ENCODE measurements at regions of chr11 and their contacts with region 1.

Region 1: GRCh38 chr11:119323538-119324033 is 6.7 kb upstream of the MCAM start:
- DNase-seq: no peak

Region 2: DNA sequence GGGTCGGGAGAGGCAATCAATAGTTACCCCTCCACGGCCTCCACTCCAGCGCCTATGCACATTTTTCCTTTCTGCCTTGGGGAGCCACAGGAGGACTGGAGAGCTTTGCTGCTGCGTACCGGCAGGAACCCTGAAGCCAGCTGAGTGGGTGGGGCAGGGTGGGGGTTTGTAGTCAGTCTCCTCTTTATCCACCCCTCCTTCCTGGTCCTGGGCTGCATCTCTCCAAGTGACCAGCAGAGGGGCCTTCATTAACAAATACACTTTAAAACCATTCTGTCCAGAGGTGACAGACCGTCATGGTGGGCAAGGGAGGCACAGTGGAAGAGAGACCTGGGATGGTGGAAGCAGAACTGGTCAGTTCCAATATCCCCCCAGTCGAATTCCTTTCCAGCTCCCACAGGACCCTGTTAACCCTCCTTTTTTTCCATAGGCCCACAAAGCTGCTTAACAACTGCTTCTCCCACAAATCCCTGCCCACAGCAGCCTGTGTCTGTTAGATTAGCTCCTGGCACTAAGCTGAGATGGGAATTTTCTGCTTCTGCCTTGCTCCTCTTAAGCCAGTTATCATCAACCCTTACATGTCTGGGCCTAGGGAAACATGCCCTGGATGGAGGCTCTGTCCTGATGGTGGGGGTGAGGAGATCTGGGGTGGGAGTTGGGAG is 178.6 kb before region 1 on chr11:
- intact Hi-C with region 1: loop called (anchors 5 kb)
- DNase-seq: no peak

Region 3: DNA sequence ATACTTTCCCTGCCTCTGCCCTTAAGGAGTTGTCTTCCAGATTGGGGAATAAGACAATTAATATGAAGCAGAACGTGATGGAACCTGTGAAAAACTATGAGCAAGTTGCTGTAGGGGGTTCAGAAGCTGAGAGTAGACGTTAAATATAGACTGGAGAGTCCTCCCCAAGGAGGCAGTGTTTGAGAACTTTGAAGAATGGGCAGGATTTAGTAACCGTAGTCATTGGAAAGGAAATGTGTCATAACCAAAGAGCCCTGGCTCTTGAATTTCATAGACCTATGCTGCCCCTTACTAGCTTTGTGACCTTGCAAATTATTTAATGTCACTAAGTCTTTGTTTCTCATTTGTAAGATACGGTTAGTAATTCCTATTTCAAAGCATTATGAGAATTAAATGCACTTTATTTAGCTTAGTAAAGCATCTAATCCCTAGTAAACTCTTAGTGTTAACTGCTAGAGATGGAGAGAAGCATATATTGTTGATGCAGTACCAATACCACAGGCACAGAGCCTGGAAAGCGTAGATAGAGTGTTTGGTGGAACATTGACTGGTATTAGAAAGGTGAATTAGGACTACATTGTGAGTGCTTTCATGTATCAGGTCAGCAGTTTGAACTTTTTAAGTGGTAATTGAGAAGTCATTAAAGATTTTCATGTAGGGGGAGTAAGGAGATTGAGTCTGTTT is 60.8 kb before region 1 on chr11:
- intact Hi-C with region 1: loop called (anchors 5 kb)
- DNase-seq: no peak

Region 4: DNA sequence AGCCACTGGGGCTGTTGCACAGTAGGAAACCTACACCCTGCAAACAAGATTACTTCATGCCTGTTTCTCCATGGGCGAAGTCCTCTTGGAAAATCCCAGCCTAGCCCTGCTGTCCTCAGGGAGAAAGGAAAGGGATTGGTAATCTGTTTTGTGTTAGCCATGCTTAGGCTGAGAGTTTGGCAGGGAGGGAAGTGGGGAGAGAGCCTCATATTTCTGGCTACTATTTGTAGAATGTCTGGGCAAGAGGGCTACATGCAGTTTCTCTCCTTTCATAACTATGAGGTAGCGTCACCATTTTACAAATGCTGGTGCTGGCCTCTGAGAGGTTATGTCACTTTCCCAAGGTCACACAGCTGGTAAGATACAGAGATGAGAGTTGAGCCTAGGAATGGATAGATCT is 23.7 kb after region 1 on chr11:
- intact Hi-C with region 1: no loop called
- DNase-seq: no peak

Region 5: DNA sequence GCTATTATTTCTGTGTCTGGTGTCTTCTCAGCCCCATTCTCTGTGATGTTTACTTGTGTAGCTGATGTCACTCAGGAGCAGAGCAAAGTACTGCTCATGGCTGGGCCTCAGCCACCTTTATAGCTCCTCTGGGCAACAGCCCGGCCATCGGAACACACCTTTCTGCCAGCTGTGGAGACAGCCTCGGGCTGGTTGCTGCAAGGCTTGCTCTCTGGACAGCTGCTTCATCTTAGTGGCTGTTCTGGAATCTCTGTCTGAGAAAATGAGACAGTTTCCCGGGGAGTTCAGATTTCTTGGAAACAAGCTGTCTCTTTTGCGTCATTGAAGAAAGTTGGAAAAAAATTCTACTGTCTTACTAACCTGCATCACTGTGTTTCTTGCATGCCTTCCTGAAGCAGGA is 79.4 kb after region 1 on chr11:
- intact Hi-C with region 1: no loop called
- DNase-seq: no peak

Measured in cardiac septum (tissue), 1 donor.